ENCODE measurements at regions of chr14 and their contacts with region 1.

Region 1: DNA sequence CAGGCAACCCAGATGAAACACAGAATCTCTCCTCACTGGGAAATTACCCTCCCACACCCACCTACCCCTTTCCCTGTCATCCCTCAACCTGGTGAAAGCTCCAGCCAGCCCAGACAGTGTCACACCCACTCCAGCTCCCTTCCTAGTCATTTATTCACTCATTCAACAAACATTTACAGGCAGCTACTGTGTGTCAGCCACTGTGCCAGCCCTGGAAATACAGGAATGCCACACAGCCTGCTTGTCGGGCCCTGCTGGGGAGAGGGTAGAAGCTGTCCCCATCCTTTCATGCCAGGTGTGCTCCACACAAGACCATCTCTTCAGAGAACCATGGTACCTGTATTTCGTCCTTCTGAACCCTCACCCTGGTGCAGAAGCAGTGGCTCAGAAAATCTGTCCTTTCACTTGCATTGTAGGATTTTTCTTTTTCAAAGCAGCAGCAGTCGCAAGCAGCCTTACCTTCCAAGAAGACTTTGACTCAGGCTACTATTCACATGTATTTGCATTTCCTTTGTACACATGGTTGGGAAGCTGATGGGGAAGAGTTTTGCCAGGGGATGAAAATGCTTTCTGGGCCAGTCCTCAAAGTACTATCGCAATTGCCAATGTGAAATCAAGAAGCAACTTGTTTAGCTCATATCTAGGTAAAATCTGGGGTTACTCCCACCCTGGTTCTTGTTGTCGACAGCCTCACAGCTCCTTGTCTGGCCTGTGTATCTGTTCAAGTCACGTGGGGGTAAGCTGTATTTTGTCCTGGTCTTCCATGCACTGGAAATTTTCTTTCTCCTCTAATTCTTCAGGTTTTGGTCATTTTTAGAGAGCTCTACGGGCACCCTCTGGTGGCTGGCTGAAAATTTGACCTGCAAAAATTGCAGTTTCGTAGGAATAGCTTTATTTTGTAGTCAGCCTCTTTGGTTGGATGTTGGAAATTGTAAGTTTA is 147.4 kb upstream of the EGLN3 start:
- DNase-seq: peak; percentile 68
- ATAC-seq: peak; percentile 66
- H3K4me3 ChIP-seq: 0 out of 6 replicates have a peak overlapping the region, but pooled peaks of 1 of the 3 experiments have one; percentile 0
- H3K27ac ChIP-seq: no peak overlapping the region
- H3K4me1 ChIP-seq: peaks cover 29% of the 10 kb centered on the region
- H3K27me3 ChIP-seq: peaks cover 0 to 33% of the 10 kb centered on the region in 2 experiments; a peak in 2 of 5 replicates
- CTCF ChIP-seq: peak; percentile 91
- EP300 ChIP-seq: no peak; a peak in 1 of 4 replicates
- POLR2A ChIP-seq: no peak
- RAD21 ChIP-seq: peak; percentile 95; the same call in 1 of the 2 replicates

Region 2: DNA sequence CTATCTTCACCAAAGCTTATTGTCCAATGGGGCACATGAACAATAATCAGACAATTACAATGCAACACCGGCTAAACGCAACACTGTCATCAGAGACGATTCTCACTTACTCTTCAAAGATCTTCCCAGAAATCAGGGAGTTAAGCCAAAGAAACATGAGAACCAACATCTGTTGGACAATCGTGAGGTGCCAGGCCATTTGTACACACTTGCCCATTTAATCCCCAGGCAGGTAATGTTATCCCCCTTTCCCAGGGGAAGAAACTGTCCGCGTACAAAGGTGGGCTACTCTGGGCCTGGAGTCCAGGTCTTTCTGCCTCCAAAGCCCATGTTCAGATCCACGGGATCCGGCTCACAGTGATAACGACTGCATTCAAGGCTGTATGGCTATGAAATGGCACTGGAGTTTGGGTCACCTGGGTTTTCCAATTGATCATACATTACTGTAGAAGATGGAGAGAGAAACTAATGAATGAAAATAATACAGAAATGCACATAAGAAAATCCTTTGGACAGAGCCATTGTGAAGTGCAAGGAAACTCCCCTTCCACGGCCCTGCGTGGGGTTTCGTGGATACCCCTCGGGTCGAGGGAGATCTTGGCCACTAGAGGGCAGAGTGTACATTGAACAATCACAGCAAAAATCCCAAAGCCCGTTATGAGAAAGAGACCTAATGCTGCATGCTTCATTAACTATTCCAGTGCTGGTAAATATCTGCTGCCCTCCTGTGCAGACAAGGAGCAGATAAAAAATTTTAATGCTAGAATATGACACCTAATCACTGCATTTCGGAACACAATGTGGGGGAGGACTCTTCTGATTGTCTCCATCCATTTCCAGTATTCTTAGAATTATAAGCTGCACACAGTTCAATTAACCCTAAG is 258.9 kb before region 1 on chr14:
- CTCF ChIA-PET with region 1: interaction called, 73 read pairs
- POLR2A ChIA-PET with region 1: interaction called, 4 read pairs
- in situ Hi-C with region 1: loop called (anchors 5 kb)
- intact Hi-C with region 1: loop called (anchors 1 kb)
- DNase-seq: peak; percentile 58
- ATAC-seq: peak; percentile 85
- H3K4me3 ChIP-seq: no peak overlapping the region
- H3K27ac ChIP-seq: no peak overlapping the region
- H3K4me1 ChIP-seq: no peaks in the 10 kb centered on the region
- H3K27me3 ChIP-seq: peaks cover 5 to 26% of the 10 kb centered on the region in 2 experiments; a peak in 3 of 5 replicates
- CTCF ChIP-seq: peak; percentile 96
- EP300 ChIP-seq: no peak
- POLR2A ChIP-seq: no peak
- RAD21 ChIP-seq: peak; percentile 87

Region 3: GRCh38 chr14:33848706-33849454 is 249.4 kb before region 1 on chr14:
- CTCF ChIA-PET with region 1: interaction called, 92 read pairs
- POLR2A ChIA-PET with region 1: interaction called, 4 read pairs
- in situ Hi-C with region 1: no loop called
- intact Hi-C with region 1: loop called (anchors 1 kb)
- DNase-seq: peak; percentile 81
- ATAC-seq: peak; percentile 97
- H3K4me3 ChIP-seq: no peak overlapping the region
- H3K27ac ChIP-seq: no peak overlapping the region
- H3K4me1 ChIP-seq: peaks cover 4% of the 10 kb centered on the region; the same call in 1 of the 2 replicates
- H3K27me3 ChIP-seq: peaks cover 0 to 5% of the 10 kb centered on the region in 2 experiments; a peak in 1 of 5 replicates
- CTCF ChIP-seq: peak; percentile 89
- EP300 ChIP-seq: no peak
- POLR2A ChIP-seq: no peak
- RAD21 ChIP-seq: peak; percentile 95

Region 4: GRCh38 chr14:33950320-33951182 is 147.8 kb before region 1 on chr14 and contains the start of gene EGLN3:
- CTCF ChIA-PET with region 1: interaction called, 8 read pairs
- POLR2A ChIA-PET with region 1: no interaction called
- in situ Hi-C with region 1: no loop called
- intact Hi-C with region 1: loop called (anchors 2 kb)
- DNase-seq: peak; percentile 55
- ATAC-seq: peak; percentile 97
- H3K4me3 ChIP-seq: peak within 1 kb of the TSS; percentile 38 to 78 (median 58)
- H3K27ac ChIP-seq: peak within 1 kb of the TSS; percentile 1
- H3K4me1 ChIP-seq: peaks cover 9% of the 10 kb centered on the region
- H3K27me3 ChIP-seq: peaks cover 0 to 43% of the 10 kb centered on the region in 2 experiments; a peak in 3 of 5 replicates
- CTCF ChIP-seq: no peak
- EP300 ChIP-seq: no peak
- POLR2A ChIP-seq: peak in 1 of 2 experiments; percentile 100; a peak in 2 of 4 replicates
- RAD21 ChIP-seq: no peak
- total RNA-seq, gene EGLN3: 0.18 TPM in 2 replicates

Region 5: DNA sequence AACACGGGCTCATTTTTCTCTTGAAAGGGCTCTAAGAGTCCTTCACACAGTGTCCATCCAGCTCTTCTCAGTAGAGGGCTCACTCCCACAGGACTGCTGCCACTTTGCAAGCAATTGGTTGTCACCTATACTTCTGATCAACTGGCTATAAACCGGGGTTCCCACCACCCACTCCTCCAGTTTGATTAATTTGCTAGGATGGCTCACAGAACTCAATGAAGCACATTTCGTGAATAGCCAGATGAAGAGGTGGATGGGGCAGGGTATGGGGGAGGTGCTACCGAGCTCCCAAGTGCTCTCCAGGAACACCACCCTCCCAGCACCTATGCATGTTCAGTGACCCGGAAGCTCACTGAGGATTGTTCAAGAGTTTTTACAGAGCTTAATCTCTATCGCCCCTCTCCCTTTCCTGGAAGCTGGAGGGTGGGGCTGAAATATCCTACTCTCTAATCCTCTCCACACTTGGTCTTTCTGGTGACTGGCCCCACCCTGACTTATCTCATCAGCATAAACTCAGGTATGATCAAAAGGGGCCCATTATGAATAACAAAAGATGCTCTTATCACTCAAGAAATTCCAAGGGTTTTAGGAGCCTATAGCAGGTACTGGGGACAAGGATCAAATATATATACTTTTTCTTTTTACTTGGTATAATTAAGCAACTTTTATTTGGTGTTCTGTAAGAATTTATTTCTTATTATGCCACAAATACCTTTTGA is 133.6 kb before region 1 on chr14:
- CTCF ChIA-PET with region 1: interaction called, 10 read pairs
- POLR2A ChIA-PET with region 1: no interaction called
- in situ Hi-C with region 1: no loop called
- intact Hi-C with region 1: loop called (anchors 1 kb)
- DNase-seq: no peak
- ATAC-seq: peak; percentile 92
- H3K4me3 ChIP-seq: no peak overlapping the region
- H3K27ac ChIP-seq: no peak overlapping the region
- H3K4me1 ChIP-seq: no peaks in the 10 kb centered on the region
- H3K27me3 ChIP-seq: peaks cover 2 to 19% of the 10 kb centered on the region in 2 experiments; a peak in 3 of 5 replicates
- CTCF ChIP-seq: peak; percentile 69
- EP300 ChIP-seq: no peak
- POLR2A ChIP-seq: no peak
- RAD21 ChIP-seq: no peak

Region 6: GRCh38 chr14:34059855-34060638 is 38.3 kb before region 1 on chr14:
- CTCF ChIA-PET with region 1: no interaction called
- POLR2A ChIA-PET with region 1: interaction called, 3 read pairs
- in situ Hi-C with region 1: no loop called
- intact Hi-C with region 1: loop called (anchors 2 kb)
- DNase-seq: peak; percentile 56
- ATAC-seq: peak; percentile 96
- H3K4me3 ChIP-seq: peak overlapping the region; percentile 28 to 66 (median 41); a peak in 5 of 6 replicates
- H3K27ac ChIP-seq: peak overlapping the region; percentile 26
- H3K4me1 ChIP-seq: peaks cover 71% of the 10 kb centered on the region
- H3K27me3 ChIP-seq: no peaks in the 10 kb centered on the region; a peak in 2 of 5 replicates
- CTCF ChIP-seq: peak; percentile 75
- EP300 ChIP-seq: peak; percentile 22 to 64; a peak in 2 of 4 replicates
- POLR2A ChIP-seq: peak in 1 of 2 experiments; percentile 67; a peak in 2 of 4 replicates
- RAD21 ChIP-seq: peak; percentile 77

Region 7: GRCh38 chr14:34199564-34199963 is 101.2 kb after region 1 on chr14:
- CTCF ChIA-PET with region 1: no interaction called
- POLR2A ChIA-PET with region 1: no interaction called
- in situ Hi-C with region 1: no loop called
- intact Hi-C with region 1: no loop called
- DNase-seq: no peak
- ATAC-seq: no peak
- H3K4me3 ChIP-seq: no peak overlapping the region
- H3K27ac ChIP-seq: no peak overlapping the region
- H3K4me1 ChIP-seq: no peaks in the 10 kb centered on the region
- H3K27me3 ChIP-seq: peaks cover 0 to 3% of the 10 kb centered on the region in 2 experiments; a peak in 1 of 5 replicates
- CTCF ChIP-seq: no peak
- EP300 ChIP-seq: no peak
- POLR2A ChIP-seq: no peak
- RAD21 ChIP-seq: no peak

Region 8: GRCh38 chr14:34650421-34651216 is 552.3 kb after region 1 on chr14:
- CTCF ChIA-PET with region 1: no interaction called
- POLR2A ChIA-PET with region 1: no interaction called
- in situ Hi-C with region 1: no loop called
- intact Hi-C with region 1: no loop called
- DNase-seq: no peak
- ATAC-seq: no peak
- H3K4me3 ChIP-seq: no peak overlapping the region
- H3K27ac ChIP-seq: no peak overlapping the region
- H3K4me1 ChIP-seq: peaks cover 27% of the 10 kb centered on the region
- H3K27me3 ChIP-seq: peaks cover 2 to 14% of the 10 kb centered on the region in 2 experiments; a peak in 4 of 5 replicates
- CTCF ChIP-seq: no peak
- EP300 ChIP-seq: no peak
- POLR2A ChIP-seq: no peak
- RAD21 ChIP-seq: no peak

Measured in HepG2 (cell line).